Right ventricle myocardium inferior (tissue), 1 donor: ENCODE measurements at regions of chr10 and their contacts with region 1.

Region 1: DNA sequence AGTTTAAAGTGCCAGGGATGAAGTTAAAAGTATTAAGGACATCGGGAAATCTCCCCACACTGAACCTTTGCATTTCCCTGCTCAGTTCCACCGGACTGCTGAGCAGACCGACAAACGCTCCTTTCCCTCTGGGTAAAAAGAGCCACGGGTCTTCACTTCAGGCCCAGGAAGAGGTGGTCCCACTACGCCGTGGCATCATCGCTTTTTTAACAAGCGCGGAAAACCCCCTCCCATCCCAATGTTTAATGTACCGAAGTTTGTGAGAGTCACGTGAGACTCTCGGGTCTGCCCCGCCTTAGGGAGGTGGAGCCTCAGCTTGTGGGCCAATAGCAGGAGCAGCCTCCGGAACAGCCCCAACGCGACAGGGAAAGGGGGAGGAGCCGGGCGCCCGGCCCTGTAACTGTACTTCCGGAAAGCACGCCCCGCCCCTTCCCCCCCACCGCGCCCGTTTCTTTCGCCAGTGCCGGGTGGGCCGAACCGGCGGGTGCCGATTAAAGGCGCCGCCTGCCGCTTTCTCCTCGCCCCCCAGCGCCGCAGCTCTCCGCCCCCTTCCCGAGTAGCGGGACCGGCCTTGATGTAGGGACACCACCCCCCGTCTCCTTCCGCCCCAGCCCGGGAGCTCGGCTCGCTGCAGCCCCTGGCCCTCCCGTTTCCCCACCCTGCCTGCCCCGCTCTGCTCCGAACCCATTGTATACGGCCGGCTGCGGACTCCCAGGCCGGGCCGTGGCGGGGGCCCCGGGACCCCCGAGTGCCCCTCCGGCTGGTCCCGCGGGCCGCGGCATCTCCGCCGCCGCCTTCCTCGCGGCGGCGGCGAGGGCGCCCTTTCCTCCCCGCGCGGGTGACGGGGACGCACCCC is 2.2 kb upstream of the TRIM8 start:
- DNase-seq: peak; percentile 99
- ATAC-seq: peak; percentile 77

Region 2: GRCh38 chr10:102503281-102504220 is 138.6 kb before region 1 on chr10 and contains the start of gene SUFU:
- intact Hi-C with region 1: loop called (anchors 2 kb)
- DNase-seq: peak; percentile 97
- ATAC-seq: peak; percentile 85
- total RNA-seq, gene SUFU: 7.8 TPM

Region 3: GRCh38 chr10:102596506-102596971 is 45.6 kb before region 1 on chr10:
- intact Hi-C with region 1: loop called (anchors 2 kb)
- DNase-seq: no peak
- ATAC-seq: peak; percentile 43

Region 4: GRCh38 chr10:102621438-102622325 is 20.4 kb before region 1 on chr10:
- intact Hi-C with region 1: loop called (anchors 2 kb)
- DNase-seq: no peak
- ATAC-seq: no peak

Region 5: GRCh38 chr10:102713814-102714620 is 71.9 kb after region 1 on chr10 and contains the start of gene ARL3:
- intact Hi-C with region 1: loop called (anchors 2 kb)
- DNase-seq: peak; percentile 99
- ATAC-seq: peak; percentile 99
- total RNA-seq, gene ARL3: 15.4 TPM

Region 6: DNA sequence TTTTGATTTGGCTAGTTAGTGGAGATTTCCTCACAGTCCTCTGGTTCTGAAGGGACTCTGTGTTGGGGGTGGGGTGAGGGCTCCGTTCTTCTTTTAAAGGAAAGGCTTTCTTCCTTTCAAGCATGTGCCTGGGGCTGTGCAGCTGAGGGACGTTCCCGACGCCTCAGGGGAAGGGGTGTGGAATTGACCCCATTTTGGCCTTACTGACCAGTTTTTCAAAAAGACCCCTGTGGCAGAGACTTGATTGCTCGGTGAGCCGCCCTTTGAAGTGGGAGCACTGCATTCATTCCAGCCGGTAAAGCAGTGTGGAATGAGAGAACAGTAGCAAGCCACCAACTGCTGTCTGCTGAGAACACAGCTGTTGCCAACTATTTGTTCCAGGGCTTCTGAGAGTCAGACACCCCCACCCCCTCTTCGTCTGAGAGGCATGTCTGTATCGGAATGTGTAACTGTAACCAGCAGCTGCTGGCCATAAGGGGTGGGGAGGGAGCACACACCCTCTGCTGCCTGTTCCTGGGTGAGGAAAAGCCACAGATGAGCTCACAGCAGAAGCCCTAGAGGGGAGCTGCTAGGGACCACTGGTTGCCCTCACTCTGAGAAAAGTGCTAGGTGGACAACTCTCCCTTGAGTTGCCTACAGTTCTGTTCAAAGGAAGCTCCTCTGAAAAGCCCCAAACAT is 134.8 kb after region 1 on chr10:
- intact Hi-C with region 1: loop called (anchors 10 kb)
- DNase-seq: peak; percentile 85
- ATAC-seq: peak; percentile 87

Region 7: DNA sequence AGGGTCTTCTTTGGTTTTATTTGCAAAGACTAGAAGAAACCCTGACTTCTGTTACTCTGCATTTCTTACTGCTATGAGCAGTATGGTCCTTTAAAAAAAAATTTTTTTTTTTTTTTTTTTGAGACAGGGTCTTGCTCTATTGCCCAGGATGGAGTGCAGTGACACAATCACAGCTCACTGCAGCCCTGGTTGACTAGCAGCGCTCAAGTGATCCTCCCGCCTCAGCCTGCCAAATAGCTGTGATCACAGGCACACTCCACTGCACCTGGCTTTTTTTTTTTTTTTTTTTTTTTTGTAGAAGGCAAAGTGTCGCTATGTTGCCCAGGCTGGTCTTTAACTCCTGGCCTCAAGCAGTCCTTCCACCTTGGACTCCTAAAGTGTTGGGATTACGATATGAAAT is 293.4 kb after region 1 on chr10:
- intact Hi-C with region 1: no loop called
- DNase-seq: no peak
- ATAC-seq: no peak